Cardiac septum (tissue), 1 donor: ENCODE measurements at regions of chr13 and their contacts with region 1.

Region 1: GRCh38 chr13:20713751-20714150 is 10.3 kb downstream of the IL17D start:
- DNase-seq: no peak

Region 2: GRCh38 chr13:20495082-20496023 is 218.4 kb before region 1 on chr13:
- intact Hi-C with region 1: loop called (anchors 10 kb)
- DNase-seq: no peak

Region 3: DNA sequence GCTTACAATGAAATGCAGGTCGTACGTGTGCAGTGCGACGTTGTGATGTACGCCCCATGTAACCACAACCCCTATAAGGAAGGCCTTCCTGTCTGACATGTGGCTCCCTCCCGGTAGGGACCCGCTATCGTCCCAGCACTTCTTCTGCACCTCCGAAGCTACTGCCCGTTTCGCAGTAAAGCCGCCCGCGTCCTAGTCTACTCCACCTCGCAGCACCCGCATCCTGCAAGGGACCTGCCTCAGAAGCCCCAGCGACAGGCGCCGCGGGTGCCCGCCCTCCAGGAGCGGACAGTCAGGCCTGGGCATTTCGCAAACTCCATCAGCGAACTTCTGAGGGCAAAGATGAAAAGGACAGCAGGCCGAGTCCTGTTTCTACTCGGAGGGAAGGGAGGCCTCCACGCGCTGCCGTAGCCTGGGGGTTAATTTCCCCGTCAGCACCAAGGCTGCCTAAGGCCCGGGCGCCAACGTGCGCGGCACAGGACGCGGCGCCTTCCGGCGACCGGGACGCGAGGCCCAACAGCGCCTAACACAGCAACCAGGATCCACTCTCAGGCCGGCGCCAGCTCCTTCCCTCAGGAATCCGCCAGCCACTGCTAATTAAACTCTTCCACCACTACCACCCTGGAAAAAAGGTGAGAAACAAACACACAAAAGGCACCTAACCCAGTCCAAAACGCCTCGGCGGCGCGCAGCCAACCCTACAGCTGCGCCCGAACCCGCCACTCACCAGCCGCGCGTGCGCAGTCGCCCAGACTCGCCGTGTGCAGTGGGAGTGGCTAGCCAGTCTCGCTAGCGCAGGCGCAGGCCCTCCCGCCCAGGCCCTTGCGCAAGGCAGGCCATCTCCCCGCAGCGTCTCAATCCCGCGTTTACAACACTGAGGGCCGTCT is 59.7 kb after region 1 on chr13 and contains the start of gene EEF1AKMT1:
- intact Hi-C with region 1: loop called (anchors 5 kb)
- DNase-seq: peak; percentile 96
- total RNA-seq, gene EEF1AKMT1: 6.2 TPM

Region 4: DNA sequence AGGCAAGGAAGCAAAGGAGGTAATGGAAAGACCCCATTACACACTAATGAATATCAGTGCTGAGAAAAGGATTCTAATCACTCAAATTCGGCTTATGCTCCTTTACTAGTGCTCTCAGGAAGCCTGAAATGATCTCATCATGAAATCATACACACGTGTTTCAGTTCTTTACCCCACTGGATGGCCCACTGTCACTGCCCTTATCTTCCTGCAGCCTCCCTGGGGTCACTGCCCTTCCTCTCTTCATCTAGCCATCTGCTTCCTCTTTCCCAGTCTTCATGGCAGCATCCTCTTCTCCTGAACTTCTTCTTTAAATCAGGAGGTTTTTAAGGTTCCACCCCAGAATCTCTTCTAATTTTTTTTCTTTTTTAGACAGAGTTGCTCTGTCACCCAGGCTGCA is 88.0 kb after region 1 on chr13:
- intact Hi-C with region 1: no loop called
- DNase-seq: no peak

Region 5: DNA sequence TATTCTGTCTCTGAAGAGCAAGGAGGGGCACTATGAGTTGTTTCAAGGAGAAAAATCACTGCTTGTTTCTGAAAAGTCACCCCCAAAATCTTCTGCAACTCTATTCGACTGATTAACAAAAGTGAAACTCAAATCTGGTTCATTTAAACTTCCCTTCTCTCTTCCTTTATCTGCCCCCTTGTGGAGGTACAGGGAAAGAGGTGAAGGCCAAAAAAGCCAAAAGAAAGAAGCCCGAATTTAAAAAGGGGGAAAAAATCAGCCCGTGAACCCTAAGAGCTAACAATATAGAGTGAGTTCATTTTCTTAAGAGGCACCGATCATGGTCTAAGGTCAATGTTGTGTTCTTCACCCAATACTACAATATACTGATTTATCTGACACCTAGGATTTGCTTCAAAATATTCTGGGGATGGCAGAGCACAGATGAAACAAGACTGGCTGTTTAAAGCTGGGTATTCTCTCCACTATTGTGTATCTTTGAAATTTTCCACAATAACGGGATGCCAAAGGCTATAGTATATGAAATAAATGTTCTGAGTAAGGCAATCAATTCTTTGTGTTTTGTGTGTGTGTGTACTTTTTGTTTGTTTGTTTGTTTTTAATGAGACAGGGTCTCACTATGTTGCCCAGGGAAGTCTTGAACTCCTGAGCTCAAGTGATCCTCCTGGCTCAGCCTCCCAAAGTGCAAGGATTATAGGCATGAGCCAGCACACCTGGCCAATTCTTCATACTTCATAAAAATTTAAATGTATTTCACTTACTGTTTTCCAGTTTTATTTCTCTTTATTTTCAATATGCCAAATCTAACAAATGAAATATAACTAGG is 115.0 kb after region 1 on chr13:
- intact Hi-C with region 1: loop called (anchors 2 kb)
- DNase-seq: no peak

Region 6: DNA sequence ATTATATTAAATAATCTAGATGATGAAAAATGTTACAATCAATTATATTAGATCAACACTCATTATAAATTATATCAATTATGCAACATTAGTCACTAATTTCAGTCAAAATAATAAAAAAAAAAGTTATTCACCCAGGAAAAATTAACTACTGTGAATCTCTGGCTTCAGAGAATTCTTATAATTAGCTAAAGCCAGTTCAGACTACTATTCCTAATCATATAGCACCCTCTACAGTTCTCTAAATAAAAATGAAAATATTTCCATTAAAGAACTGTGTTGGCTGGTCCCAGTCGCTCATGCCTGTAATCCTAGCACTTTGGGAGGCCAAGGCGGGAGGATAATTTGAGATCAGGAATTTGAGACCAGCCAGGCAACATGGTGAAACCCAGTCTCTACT is 155.8 kb after region 1 on chr13:
- intact Hi-C with region 1: loop called (anchors 2 kb)
- DNase-seq: no peak

Region 7: DNA sequence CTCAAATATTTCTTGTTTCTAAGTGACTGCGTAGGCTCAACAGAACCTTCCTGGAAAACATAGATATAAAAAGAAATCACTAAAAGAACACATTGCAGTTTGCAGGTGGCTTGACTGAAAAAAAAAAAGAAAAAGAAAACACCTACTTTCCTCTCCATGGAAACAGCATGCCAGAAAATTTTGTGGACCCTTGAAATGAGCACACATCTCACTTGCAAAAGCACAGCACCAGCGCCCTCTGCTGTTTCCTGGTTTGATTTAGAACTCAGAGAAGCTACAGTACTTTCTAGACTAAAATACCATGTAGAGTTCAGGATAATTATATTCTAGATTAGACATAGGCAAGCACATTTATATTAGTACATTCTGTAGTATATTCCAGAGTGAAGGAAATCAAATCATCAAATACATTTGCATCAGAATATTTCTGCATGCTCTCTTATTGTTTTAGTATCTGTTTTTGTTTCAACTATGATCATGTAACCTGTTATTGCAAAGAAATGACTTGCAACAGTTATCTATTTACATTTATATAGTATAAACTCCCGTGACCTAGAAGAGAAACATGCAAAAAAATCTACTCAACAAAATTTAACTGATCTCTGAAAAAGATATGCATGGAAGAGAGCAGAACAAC is 211.1 kb after region 1 on chr13:
- intact Hi-C with region 1: loop called (anchors 5 kb)
- DNase-seq: peak; percentile 78